Astrocyte of the cerebellum (primary cell): ENCODE measurements at regions of chr5 and their contacts with region 1.

Region 1: DNA sequence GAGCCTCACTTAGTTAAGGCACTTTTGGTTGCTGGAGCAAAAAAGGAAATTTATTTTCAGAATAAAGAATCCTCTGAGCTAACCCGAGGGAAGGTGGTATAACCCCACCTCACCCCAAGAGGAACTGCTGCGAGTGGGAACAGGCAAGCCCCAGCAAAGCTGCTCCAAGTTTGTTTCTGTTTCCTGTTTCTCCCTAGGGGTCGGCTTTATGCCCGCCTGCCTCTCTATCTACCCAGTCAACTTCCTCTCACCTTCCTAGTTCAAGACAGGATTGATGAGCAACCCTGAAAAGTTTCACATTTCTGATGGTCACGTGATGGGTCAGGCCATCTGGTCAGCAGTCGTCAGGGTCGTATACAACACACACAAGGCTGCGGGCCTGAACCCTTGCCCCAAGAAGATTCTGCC is 31.1 kb downstream of the TRIO start:
- DNase-seq: no peak
- H3K4me3 ChIP-seq: no peak overlapping the region
- CTCF ChIP-seq: no peak

Region 2: DNA sequence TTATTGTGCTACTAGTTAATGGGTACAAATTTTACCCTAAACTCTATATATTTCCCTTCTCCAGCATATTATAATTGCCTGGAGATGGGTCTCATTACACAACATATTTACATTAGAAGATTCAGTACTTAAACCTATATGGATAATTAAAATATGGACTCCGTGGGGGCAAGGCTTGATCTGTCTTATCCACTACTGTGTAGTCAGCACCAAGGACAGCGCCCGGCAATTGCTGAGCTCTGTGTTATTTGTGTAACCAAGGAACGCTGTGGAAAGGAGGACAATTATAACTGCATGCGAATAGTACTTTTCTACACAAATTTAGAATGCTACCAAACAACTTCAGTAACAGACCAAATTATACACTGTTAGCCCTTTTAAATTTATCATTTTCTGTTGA is 307.4 kb before region 1 on chr5:
- in situ Hi-C with region 1: no loop called
- DNase-seq: peak; percentile 28
- H3K4me3 ChIP-seq: no peak overlapping the region
- CTCF ChIP-seq: no peak

Region 3: GRCh38 chr5:14234219-14234618 is 60.0 kb after region 1 on chr5:
- in situ Hi-C with region 1: loop called (anchors 10 kb)
- DNase-seq: no peak
- H3K4me3 ChIP-seq: no peak overlapping the region
- CTCF ChIP-seq: no peak